HepG2 (cell line): ENCODE measurements at regions of chr11 and their contacts with region 1.

Region 1: GRCh38 chr11:58675334-58676155 is 53.1 kb downstream of the CNTF start:
- DNase-seq: peak; percentile 32
- ATAC-seq: peak; percentile 99
- H3K4me3 ChIP-seq: no peak overlapping the region
- H3K27ac ChIP-seq: no peak overlapping the region
- H3K4me1 ChIP-seq: no peaks in the 10 kb centered on the region
- H3K27me3 ChIP-seq: no peaks in the 10 kb centered on the region
- CTCF ChIP-seq: peak; percentile 90
- EP300 ChIP-seq: no peak
- POLR2A ChIP-seq: no peak
- RAD21 ChIP-seq: peak; percentile 45; the same call in 1 of the 2 replicates

Region 2: DNA sequence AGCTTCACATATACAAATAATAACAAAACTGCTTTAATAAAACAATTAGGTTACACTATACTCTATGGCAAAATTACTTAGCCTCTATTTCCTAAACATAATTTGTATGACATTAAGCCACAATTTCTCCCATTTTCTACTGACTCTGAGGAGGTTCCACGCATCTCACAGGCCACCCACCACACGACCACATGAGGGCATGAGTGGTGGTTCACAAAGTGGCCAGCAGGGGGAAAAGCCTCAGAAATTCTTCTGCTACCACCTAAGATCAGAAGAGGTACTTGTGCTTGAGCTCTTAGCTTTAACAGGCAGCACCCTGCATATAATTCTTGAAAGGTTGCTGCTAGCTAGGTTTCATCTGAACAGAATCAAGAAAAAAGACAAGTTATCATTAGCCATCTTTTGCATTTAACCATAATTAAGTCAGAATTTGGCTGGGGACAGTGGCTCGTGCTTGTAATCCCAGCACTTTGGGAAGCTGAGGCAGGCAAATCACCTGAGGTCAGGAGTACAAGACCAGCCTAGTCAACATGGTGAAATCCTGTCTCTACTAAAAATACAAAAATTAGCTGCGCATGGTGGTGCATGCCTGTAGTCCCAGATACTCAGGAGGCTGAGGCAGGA is 107.5 kb before region 1 on chr11:
- CTCF ChIA-PET with region 1: no interaction called
- POLR2A ChIA-PET with region 1: no interaction called
- in situ Hi-C with region 1: no loop called
- intact Hi-C with region 1: loop called (anchors 1 kb)
- DNase-seq: peak; percentile 49
- ATAC-seq: peak; percentile 94
- H3K4me3 ChIP-seq: no peak overlapping the region
- H3K27ac ChIP-seq: no peak overlapping the region
- H3K4me1 ChIP-seq: peaks cover 8% of the 10 kb centered on the region
- H3K27me3 ChIP-seq: no peaks in the 10 kb centered on the region
- CTCF ChIP-seq: peak; percentile 67
- EP300 ChIP-seq: no peak
- POLR2A ChIP-seq: no peak
- RAD21 ChIP-seq: 0 out of 2 replicates have a peak, but pooled peaks have one; percentile 18

Region 3: DNA sequence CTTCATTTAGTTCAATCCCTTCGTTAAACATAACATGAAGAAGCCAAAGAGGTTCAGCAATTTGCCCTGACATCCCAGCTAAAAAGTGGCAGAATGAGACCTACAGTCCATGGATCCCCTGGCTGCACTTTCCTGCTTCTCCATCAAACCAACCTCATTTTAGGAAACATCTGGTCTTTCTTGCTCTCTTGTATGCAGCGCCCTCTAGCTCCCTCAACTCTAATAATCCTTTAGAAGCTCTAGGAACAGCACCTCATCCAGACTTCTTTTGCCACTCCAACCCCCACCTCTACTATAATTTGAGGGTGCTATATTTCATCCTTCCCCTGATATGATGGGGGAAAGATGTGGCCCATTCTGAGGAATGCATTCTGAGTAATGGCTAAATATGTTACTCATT is 45.7 kb before region 1 on chr11:
- CTCF ChIA-PET with region 1: no interaction called
- POLR2A ChIA-PET with region 1: no interaction called
- in situ Hi-C with region 1: no loop called
- intact Hi-C with region 1: no loop called
- DNase-seq: peak; percentile 60
- ATAC-seq: peak; percentile 78
- H3K4me3 ChIP-seq: no peak overlapping the region
- H3K27ac ChIP-seq: no peak overlapping the region
- H3K4me1 ChIP-seq: no peaks in the 10 kb centered on the region
- H3K27me3 ChIP-seq: no peaks in the 10 kb centered on the region
- CTCF ChIP-seq: peak; percentile 69
- EP300 ChIP-seq: no peak
- POLR2A ChIP-seq: no peak
- RAD21 ChIP-seq: no peak

Region 4: GRCh38 chr11:58711832-58712231 is 36.3 kb after region 1 on chr11:
- CTCF ChIA-PET with region 1: no interaction called
- POLR2A ChIA-PET with region 1: no interaction called
- in situ Hi-C with region 1: no loop called
- intact Hi-C with region 1: loop called (anchors 5 kb)
- DNase-seq: no peak
- ATAC-seq: no peak
- H3K4me3 ChIP-seq: no peak overlapping the region
- H3K27ac ChIP-seq: no peak overlapping the region
- H3K4me1 ChIP-seq: no peaks in the 10 kb centered on the region
- H3K27me3 ChIP-seq: no peaks in the 10 kb centered on the region
- CTCF ChIP-seq: no peak
- EP300 ChIP-seq: no peak
- POLR2A ChIP-seq: no peak
- RAD21 ChIP-seq: no peak

Region 5: DNA sequence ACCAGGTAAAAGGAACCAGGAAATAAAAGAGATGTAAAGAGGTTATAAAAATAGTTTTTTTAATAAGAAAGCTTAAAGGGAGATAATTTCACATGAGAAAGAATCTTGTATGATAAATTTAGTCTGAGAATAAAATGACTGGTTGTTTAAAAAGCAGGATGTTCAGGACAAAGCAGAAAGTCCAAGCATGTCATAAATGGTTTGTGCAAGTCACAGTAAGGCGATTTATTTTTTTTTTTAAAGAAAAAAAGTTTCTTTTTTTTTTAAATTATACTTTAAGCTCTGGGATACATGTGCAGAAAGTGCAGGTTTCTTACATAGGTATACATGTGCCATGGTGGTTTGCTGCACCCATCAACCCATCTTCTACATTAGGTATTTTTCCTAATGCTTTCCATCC is 138.1 kb after region 1 on chr11:
- CTCF ChIA-PET with region 1: no interaction called
- POLR2A ChIA-PET with region 1: no interaction called
- in situ Hi-C with region 1: no loop called
- intact Hi-C with region 1: no loop called
- DNase-seq: no peak
- ATAC-seq: no peak
- H3K4me3 ChIP-seq: no peak overlapping the region
- H3K27ac ChIP-seq: no peak overlapping the region
- H3K4me1 ChIP-seq: no peaks in the 10 kb centered on the region
- H3K27me3 ChIP-seq: no peaks in the 10 kb centered on the region
- CTCF ChIP-seq: no peak
- EP300 ChIP-seq: no peak
- POLR2A ChIP-seq: no peak
- RAD21 ChIP-seq: no peak